HAP-1 (cell line): ENCODE measurements at regions of chr2 and their contacts with region 1.

Region 1: GRCh38 chr2:191679818-191680600 is 2.1 kb downstream of the NABP1 start:
- DNase-seq: no peak
- H3K4me3 ChIP-seq: no peak overlapping the region
- H3K4me1 ChIP-seq: peaks cover 12% of the 10 kb centered on the region
- H3K27me3 ChIP-seq: peaks cover 9% of the 10 kb centered on the region

Region 2: GRCh38 chr2:191566344-191566743 is 113.7 kb before region 1 on chr2:
- in situ Hi-C with region 1: loop called (anchors 10 kb)
- DNase-seq: peak; percentile 46 to 86
- H3K4me3 ChIP-seq: no peak overlapping the region
- H3K4me1 ChIP-seq: peaks cover 7% of the 10 kb centered on the region
- H3K27me3 ChIP-seq: peaks cover 8% of the 10 kb centered on the region; the same call in 1 of the 2 replicates